AG04449 (cell line): ENCODE measurements at regions of chr7 and their contacts with region 1.

Region 1: DNA sequence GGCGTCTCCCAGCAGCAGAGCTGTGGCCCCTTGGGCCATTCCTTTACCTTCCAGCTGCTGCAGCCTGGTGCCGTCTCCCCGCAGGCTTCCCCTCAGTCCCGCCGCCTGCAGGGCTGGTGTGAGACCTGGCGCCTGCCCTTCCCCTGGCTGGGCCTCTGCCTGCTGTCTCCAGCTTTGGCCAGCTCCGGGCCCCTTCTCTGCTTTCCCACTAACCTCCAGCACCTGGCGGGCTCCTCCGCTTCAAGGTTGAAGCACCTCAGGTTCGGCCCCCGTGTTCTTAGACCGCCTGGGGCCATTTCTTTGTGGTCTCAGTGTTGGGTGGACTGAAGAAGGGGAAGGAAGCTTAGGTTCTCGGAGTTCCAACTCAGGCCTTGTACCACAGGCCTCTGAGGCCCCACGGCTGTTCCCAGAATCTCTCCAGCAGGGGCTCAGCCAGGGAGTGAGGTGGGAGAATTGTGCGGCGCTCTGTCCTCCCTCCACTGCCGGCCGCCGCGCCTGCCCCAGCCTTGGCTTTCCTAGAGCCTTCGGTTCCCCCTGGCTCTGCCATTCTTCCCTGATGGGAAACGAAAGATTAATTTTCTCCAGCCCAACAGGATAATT is 30.3 kb downstream of the GBX1 start:
- DNase-seq: no peak
- H3K4me3 ChIP-seq: no peak overlapping the region
- CTCF ChIP-seq: no peak

Region 2: GRCh38 chr7:151123822-151124464 is 13.2 kb before region 1 on chr7:
- CTCF ChIA-PET with region 1: interaction called, 29 read pairs
- POLR2A ChIA-PET with region 1: no interaction called
- DNase-seq: no peak
- H3K4me3 ChIP-seq: no peak overlapping the region
- CTCF ChIP-seq: peak; percentile 100

Region 3: DNA sequence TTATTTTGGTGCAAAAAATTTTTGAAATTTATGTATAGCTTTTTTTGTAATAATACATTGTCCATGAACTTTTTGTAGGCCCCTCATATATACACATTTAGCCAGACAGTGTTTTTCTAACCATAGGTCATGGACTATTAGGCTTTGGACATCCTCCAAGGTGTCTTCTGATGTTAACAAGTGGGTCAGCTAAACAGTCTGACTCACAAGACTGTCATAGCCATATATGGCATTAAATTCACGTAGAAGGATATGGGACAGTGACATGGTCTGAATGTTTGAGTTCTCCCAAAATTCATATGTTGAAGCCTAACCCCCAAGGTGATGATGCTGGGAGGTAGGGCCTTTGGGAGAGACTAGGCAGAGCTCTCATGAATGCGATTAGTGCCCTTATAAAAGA is 190.5 kb after region 1 on chr7:
- CTCF ChIA-PET with region 1: no interaction called
- POLR2A ChIA-PET with region 1: no interaction called
- DNase-seq: no peak
- H3K4me3 ChIP-seq: no peak overlapping the region
- CTCF ChIP-seq: no peak

Region 4: DNA sequence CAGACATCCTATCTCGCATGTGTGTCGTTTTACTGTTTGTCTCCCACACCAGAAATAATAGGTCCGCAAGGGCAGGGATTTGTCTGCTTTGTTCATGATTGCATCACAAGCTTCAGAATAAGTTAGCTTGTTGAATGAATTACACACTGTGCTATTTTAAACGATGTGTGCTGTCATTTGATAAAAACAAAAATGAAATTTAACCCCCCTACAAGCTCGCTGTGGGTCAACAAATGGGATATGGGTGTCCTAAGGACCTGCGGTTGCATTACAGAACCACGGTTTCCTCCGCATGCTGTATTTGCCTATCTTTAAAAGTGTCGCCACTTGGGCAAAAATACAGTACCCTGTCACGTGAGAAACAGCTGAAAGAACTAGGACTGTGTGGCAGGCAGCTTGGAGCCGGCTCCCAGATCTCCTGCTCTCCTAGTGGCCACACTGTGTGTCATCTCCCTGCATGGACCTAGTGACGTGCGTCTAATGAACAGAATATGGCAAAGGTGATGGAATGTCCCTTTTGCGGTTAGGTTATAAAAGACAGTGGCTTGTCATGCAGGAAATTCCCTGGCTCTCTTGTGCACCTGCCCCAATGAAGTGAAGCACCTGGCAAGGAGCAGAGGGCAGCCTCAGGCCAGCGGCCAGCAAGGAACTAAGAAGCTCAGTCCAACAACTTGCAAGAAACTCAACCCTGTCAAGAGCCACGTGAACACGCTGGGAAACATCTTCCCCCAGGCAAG is 335.6 kb after region 1 on chr7:
- CTCF ChIA-PET with region 1: no interaction called
- POLR2A ChIA-PET with region 1: no interaction called
- DNase-seq: no peak
- H3K4me3 ChIP-seq: no peak overlapping the region
- CTCF ChIP-seq: no peak